ENCODE measurements at regions of chr5 and their contacts with region 1.

Region 1: GRCh38 chr5:57225553-57225952 is 51.7 kb downstream of the GPBP1 start:
- DNase-seq: no peak
- ATAC-seq: no peak

Region 2: GRCh38 chr5:56270568-56271392 is 954.8 kb before region 1 on chr5:
- intact Hi-C with region 1: loop called (anchors 5 kb)
- DNase-seq: peak; percentile 91
- ATAC-seq: peak; percentile 99

Region 3: GRCh38 chr5:56896761-56897160 is 328.8 kb before region 1 on chr5:
- intact Hi-C with region 1: loop called (anchors 5 kb)
- DNase-seq: no peak
- ATAC-seq: no peak

Region 4: DNA sequence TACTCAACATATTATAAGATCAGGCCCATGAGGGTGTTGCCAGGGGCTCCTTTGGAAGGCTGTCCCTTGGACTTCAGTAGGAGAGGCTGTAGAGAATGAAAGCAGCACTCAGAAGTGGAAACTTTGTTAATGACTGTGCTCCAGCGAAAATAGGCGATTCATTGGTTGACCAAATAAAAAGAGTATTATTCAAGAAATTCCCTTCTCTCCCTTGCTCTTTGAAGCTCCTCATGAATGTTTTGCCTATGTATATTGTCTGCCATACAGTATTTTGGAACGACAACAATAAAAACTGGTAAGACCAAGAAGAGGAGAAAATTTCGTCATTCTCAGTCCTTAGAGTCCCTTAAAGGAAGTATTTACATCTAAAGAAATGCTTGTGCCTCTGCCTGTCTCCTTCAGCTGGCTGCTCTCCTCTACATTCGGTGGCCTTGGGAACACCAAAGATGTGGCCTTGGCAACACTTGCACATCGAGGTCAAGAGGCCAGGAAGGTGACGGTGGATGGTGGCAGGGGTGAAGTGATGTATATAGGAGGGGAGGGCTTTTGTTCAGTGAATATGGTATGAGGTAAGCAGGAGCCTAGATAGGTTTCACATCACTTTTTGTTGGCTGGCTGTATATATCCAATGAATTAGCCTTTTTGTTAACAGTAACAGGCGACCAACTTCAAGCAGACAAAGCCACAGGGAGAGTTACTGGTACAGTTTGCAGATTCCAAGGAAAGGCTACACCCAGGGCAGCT is 352.1 kb after region 1 on chr5:
- intact Hi-C with region 1: no loop called
- DNase-seq: no peak
- ATAC-seq: no peak